Heart left ventricle (tissue), 16 donors: ENCODE measurements at regions of chr15 and their contacts with region 1.

Region 1: GRCh38 chr15:90001683-90002427 is 731 bp downstream of the ZNF710 start:
- DNase-seq: peak; percentile 64 to 77 (median 76)
- ATAC-seq: peak in 3 of 4 donors; percentile 25 to 50 (median 46)
- H3K4me3 ChIP-seq: peak overlapping the region; percentile 66 to 98 (median 85)
- H3K27ac ChIP-seq: peak overlapping the region; percentile 69 to 95 (median 87)
- H3K4me1 ChIP-seq: peaks cover 0 to 71% (median 39%) of the 10 kb centered on the region in 12 donors
- H3K27me3 ChIP-seq: no peaks in the 10 kb centered on the region
- CTCF ChIP-seq: no peak
- POLR2A ChIP-seq: no peak

Region 2: GRCh38 chr15:89893696-89894455 is 108.0 kb before region 1 on chr15 and contains the start of gene AP3S2:
- intact Hi-C with region 1: loop called in 3 of 10 experiments (anchors 5 to 10 kb)
- DNase-seq: peak; percentile 90 to 94 (median 93)
- ATAC-seq: peak; percentile 98 to 99 (median 99)
- H3K4me3 ChIP-seq: peak within 1 kb of the TSS; percentile 55 to 100 (median 91)
- H3K27ac ChIP-seq: peak within 1 kb of the TSS; percentile 42 to 98 (median 92)
- H3K4me1 ChIP-seq: peaks cover 0 to 30% (median 13%) of the 10 kb centered on the region in 12 donors
- H3K27me3 ChIP-seq: no peaks in the 10 kb centered on the region
- CTCF ChIP-seq: peak in 1 of 12 donors; percentile 7
- POLR2A ChIP-seq: peak in 1 of 2 donors; percentile 61
- total RNA-seq, gene AP3S2: 37.1 to 64.6 (median 43.3) TPM

Region 3: DNA sequence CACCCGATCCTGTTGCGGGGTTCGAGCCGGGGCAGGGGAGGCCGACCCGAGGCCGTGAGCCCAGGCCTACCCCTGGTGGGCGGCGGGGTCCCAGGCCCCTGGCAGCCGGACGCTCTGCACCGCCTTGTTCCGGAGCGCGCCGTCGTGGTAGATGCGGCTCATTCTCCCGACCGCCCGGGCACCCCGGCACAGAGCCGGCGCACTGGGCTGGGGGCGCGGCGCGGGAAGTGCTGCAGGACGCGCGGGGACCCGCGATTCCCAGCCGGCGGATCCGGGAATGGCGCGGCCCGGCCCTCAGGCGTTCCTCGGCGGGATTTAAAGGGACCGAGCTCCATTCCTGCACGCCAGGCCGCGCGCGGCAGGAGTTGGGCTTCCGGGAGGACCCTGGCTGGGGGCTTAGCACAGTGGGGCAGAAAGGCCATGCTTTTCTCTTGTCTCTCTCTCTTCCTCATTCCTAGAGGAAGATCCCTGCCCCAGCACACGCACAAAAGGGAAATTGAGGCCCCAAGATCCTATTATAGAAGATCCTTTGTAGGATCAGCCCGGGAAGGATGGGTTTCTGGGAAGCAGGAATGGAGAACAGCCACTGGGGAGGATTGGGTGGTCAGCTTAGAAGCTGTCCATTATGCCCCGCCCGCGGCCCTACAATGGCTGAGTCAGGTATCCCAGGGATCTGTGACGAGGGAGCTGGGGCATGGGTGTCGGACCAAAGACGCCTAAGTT is 89.0 kb before region 1 on chr15 and contains the start of gene ARPIN:
- intact Hi-C with region 1: loop called in 2 of 10 experiments (anchors 5 to 10 kb)
- DNase-seq: peak; percentile 65 to 83 (median 66)
- ATAC-seq: peak; percentile 69 to 92 (median 84)
- H3K4me3 ChIP-seq: peak within 1 kb of the TSS; percentile 65 to 99 (median 84)
- H3K27ac ChIP-seq: peak within 1 kb of the TSS in 11 of 12 donors; percentile 41 to 90 (median 77)
- H3K4me1 ChIP-seq: peaks cover 0 to 26% (median 13%) of the 10 kb centered on the region in 12 donors
- H3K27me3 ChIP-seq: no peaks in the 10 kb centered on the region
- CTCF ChIP-seq: no peak
- POLR2A ChIP-seq: no peak
- total RNA-seq, gene ARPIN: 7.3 to 15.3 (median 11.5) TPM

Region 4: GRCh38 chr15:89946781-89947221 is 55.1 kb before region 1 on chr15:
- intact Hi-C with region 1: no loop called
- DNase-seq: no peak
- ATAC-seq: no peak
- H3K4me3 ChIP-seq: no peak overlapping the region
- H3K27ac ChIP-seq: no peak overlapping the region
- H3K4me1 ChIP-seq: no peaks in the 10 kb centered on the region
- H3K27me3 ChIP-seq: no peaks in the 10 kb centered on the region
- CTCF ChIP-seq: no peak
- POLR2A ChIP-seq: no peak

Region 5: DNA sequence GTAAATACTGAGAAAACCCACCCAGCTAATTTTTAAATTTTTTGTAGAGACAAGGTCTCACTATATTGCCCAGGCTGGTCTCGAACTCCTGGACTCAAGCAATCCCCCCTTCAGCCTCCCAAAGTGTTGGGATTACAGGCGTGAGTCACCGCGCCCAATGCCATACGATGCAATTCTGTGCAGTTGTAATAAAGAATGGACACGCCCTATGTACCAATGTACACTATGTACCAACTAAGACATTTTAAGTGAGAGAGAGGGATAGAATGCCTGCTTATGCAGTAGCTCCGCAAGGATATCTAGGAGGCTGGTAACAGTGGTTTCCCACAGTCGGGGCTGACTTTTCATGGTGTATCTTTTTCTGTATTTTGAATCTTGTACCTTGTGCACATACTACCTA is 13.9 kb after region 1 on chr15:
- intact Hi-C with region 1: loop called in 1 of 10 experiments (anchors 1 kb)
- DNase-seq: no peak
- ATAC-seq: no peak
- H3K4me3 ChIP-seq: no peak overlapping the region
- H3K27ac ChIP-seq: no peak overlapping the region
- H3K4me1 ChIP-seq: peaks cover 0 to 82% (median 15%) of the 10 kb centered on the region in 12 donors
- H3K27me3 ChIP-seq: no peaks in the 10 kb centered on the region
- CTCF ChIP-seq: no peak
- POLR2A ChIP-seq: no peak

Region 6: GRCh38 chr15:90184118-90184785 is 182.4 kb after region 1 on chr15:
- intact Hi-C with region 1: no loop called
- DNase-seq: peak; percentile 69 to 93 (median 83)
- ATAC-seq: peak; percentile 86 to 91 (median 90)
- H3K4me3 ChIP-seq: peak overlapping the region; percentile 49 to 91 (median 71)
- H3K27ac ChIP-seq: peak overlapping the region; percentile 79 to 98 (median 88)
- H3K4me1 ChIP-seq: peaks cover 0 to 50% (median 9%) of the 10 kb centered on the region in 12 donors
- H3K27me3 ChIP-seq: peaks cover 0 to 16% (median 0%) of the 10 kb centered on the region in 9 donors
- CTCF ChIP-seq: no peak
- POLR2A ChIP-seq: no peak